ENCODE measurements at regions of chr11 and their contacts with region 1.

Region 1: DNA sequence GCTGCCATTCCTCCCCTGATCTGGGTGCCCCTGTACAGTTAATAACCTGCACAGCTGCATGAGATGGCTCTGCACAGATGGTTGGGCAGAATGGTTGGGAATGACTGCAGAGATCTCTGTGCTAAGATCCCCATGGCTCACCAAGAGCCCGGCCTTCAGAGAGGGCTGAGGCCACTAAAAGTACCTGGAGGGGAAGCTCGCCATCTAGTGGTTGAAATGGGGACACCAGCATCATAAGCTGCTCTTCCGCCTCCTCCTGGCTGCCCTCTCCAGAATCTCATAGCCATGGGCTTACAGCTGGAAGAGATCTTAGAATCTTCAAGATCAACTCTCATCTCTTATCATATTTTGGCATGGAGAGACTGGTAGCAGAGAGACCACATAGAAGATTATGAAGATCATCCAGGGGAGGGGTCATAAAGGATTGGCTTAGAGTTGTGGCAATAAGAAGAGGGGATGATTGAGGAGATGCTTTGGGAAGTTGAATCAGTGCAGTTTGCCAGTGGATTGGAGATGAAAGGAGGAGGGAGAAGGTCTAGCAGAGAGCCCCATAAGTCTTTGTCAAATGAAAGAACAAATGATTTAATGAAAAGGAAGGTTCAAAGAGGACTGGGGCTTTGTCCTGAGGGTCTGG is 22.0 kb upstream of the TLCD5 start:
- DNase-seq: peak; percentile 58
- H3K4me3 Mint-ChIP-seq: no peak overlapping the region
- H3K27ac Mint-ChIP-seq: no peak overlapping the region
- H3K4me1 Mint-ChIP-seq: peaks cover 9% of the 10 kb centered on the region
- H3K27me3 Mint-ChIP-seq: peaks cover 34% of the 10 kb centered on the region

Region 2: DNA sequence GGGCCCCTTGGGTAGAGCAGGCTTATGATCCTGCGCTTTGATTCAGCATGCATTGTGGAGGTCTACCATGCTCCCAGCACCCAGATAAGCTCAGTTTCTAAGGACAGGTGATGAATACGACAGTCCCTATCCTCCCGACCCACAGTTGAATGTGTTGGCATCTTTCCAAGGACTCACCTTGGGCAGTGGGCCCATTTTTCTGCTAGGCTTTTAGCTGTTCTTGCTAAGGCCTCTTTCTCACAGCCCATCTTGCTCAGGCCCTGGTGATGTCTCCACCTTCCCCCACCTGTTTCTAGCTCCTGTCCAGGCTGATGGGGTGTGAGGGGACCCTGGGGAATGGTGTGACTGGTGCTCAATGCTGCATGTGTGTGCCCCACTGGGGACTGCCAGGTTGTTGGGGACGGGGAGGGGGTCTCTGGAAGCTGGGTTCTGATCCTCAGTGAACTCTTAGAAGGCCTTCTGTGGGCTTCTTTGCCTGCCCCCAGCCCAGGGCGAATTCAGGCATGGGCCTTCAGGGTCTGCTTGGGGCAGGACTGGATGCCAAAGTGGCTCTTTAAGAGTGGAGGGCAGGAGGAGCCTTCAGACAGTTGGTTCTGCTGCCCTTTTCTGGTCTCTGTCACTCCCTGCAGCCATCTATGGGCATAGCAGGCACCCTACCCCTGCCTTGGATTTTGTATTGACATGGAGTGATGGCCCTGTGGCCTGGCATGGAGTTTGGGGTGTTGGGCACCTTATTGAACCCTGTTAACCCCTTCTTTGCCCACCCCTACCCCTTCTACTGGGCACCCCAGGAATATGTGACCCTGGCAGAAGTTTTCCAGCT is 1662.6 kb before region 1 on chr11:
- CTCF ChIA-PET with region 1: no interaction called
- POLR2A ChIA-PET with region 1: no interaction called
- DNase-seq: no peak
- H3K4me3 Mint-ChIP-seq: no peak overlapping the region
- H3K27ac Mint-ChIP-seq: no peak overlapping the region
- H3K4me1 Mint-ChIP-seq: no peaks in the 10 kb centered on the region
- H3K27me3 Mint-ChIP-seq: peaks cover 2% of the 10 kb centered on the region

Region 3: GRCh38 chr11:119599864-119600541 is 703.1 kb before region 1 on chr11:
- CTCF ChIA-PET with region 1: no interaction called
- POLR2A ChIA-PET with region 1: no interaction called
- DNase-seq: no peak
- H3K4me3 Mint-ChIP-seq: no peak overlapping the region
- H3K27ac Mint-ChIP-seq: no peak overlapping the region
- H3K4me1 Mint-ChIP-seq: no peaks in the 10 kb centered on the region
- H3K27me3 Mint-ChIP-seq: peaks cover 22% of the 10 kb centered on the region

Region 4: DNA sequence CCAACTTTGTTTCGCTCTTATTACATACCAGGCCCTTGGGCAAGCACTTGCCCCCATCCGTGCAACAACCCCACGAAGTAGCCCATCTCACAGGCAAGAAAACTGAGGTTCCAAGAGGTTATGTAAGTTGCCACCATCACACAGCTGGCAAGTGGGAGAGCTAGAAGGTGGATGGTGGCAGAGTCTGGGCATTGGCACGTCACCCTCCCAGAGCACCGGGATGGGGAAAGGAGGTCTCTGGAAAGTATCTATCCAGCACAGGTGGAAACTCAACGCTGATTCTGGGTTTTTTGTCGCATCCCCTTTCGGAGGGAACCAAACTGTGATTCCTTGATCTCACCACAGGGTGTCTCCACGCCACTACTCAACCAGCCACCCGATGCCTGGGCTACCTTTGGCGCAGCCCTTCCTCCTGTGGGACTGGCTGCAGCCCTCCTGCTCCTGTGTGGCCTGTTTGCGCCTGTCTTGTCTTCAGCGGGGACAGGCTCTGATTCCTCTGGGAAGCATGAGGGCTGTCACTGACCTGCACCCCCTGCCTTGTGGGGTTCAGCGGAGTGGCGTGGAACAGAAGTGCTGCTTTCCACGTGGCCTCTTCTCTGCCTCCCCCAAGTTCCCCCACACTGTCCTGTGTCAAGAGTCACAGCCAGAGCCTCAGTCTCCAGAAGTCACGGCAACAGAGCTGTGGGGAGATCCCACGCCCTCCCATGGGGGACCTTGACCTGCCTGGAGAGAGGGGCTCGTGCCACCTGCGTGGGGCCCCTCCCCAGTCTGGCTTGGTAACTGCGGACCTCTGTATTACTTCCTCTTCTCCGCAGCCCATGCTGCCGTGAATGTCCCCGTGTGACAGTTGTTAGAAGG is 130.8 kb before region 1 on chr11:
- CTCF ChIA-PET with region 1: interaction called, 61 read pairs
- POLR2A ChIA-PET with region 1: no interaction called
- DNase-seq: peak; percentile 52
- H3K4me3 Mint-ChIP-seq: no peak overlapping the region
- H3K27ac Mint-ChIP-seq: no peak overlapping the region
- H3K4me1 Mint-ChIP-seq: peaks cover 3% of the 10 kb centered on the region
- H3K27me3 Mint-ChIP-seq: peaks cover 68% of the 10 kb centered on the region

Region 5: GRCh38 chr11:120235024-120235861 is 67.9 kb before region 1 on chr11:
- CTCF ChIA-PET with region 1: interaction called, 272 read pairs
- POLR2A ChIA-PET with region 1: interaction called, 4 read pairs
- DNase-seq: peak; percentile 72
- H3K4me3 Mint-ChIP-seq: no peak overlapping the region
- H3K27ac Mint-ChIP-seq: no peak overlapping the region
- H3K4me1 Mint-ChIP-seq: no peaks in the 10 kb centered on the region
- H3K27me3 Mint-ChIP-seq: peaks cover 58% of the 10 kb centered on the region

Region 6: DNA sequence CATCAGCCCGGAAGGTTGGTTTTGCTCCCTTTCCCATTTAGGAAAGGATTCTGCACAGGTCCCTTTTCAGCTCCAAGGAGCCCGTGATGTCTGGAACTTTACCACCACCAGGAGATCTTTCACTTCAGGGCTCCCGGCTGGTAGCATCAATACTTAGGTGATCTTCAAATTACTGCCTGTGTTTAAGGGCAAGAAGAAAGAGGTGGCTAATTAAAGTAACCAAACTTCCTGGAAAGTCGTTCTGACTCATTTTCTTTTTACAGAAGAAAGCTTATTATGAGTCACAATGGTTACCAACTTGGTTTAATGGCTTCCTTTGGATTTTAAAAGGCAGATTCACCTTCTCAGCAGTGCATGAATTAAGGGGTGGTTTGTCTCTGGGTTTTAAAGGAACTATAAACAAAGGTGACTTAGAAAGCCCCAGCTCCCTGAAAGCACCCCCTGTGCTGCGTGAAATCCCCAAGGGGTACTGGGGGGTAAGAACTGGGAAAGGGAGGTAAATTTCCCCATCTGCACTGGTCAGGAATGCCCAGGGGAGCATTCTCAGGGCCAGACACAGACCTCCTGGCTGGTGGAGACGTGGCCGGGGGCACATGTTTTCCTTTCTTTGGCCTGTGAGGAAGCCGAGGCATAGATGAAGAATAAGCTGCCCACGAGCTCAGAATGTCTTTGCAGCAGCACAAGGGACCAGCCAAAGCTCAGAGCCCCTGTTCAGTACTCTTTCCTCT is 54.4 kb before region 1 on chr11:
- CTCF ChIA-PET with region 1: interaction called, 113 read pairs
- POLR2A ChIA-PET with region 1: interaction called, 3 read pairs
- DNase-seq: peak; percentile 24
- H3K4me3 Mint-ChIP-seq: peak overlapping the region; percentile 36
- H3K27ac Mint-ChIP-seq: peak overlapping the region; percentile 61
- H3K4me1 Mint-ChIP-seq: peaks cover 54% of the 10 kb centered on the region
- H3K27me3 Mint-ChIP-seq: peaks cover 77% of the 10 kb centered on the region

Region 7: DNA sequence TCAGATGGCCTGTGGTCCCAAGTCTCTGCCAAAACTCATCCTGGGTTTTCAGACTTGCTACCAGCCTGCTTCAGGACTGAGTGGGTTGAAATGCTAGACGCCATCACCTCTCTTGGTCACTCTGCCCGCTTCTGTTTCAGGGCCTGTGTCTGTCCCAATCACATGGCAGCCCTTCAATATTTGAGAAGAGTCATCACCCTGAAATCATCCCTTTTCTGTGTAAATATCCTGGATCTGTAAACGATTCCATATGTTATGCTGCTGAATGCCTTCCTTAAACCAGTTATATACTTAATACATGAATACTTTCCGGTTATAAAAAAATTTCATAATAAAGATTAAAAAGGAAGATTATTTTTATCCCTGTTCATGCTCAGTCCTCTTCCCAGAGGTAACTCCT is 17.9 kb before region 1 on chr11:
- CTCF ChIA-PET with region 1: interaction called, 22 read pairs
- POLR2A ChIA-PET with region 1: no interaction called
- DNase-seq: no peak
- H3K4me3 Mint-ChIP-seq: no peak overlapping the region
- H3K27ac Mint-ChIP-seq: no peak overlapping the region
- H3K4me1 Mint-ChIP-seq: no peaks in the 10 kb centered on the region
- H3K27me3 Mint-ChIP-seq: peaks cover 39% of the 10 kb centered on the region

Region 8: DNA sequence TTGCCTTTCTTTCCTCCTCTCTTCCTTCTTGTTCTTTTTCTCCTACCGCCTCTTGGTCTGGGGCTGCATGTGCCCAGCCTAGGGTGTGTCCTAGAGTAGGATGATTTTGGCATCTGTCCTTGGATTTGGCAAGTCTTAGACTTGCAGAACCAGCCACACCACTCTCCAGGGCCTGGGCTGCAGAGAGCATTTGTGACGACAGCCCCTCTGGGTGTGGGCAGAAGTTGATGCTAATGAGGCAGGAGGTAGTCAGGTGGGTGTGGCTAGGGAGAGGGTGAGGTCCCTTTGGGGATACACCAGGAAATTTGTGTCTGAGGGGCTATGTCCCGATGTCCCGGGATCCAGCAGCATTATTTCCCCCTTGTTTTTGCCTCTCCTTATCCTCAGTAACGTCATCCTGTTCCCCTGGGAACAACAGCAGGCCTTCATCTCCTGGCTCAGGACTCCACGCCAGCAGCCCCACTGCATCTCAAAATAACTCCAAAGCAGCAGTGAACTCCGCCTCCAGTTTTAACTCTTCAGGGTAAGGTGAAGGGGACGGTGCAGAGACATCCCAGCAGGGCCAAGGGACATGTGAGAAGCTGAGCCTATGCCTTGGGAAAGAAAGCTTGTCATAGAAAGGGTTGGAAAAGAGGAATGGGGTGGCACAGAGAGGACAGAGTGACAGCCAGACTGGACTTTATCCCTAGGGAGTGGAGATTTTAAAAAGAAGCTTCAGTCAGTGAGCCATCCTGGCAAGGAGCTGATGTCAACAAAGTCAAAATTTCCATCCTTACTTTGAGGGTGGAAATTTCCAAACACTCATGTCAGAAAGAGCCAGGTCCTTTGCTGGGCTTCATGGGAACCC is 13.9 kb after region 1 on chr11:
- CTCF ChIA-PET with region 1: interaction called, 16 read pairs
- POLR2A ChIA-PET with region 1: no interaction called
- DNase-seq: no peak
- H3K4me3 Mint-ChIP-seq: no peak overlapping the region
- H3K27ac Mint-ChIP-seq: no peak overlapping the region
- H3K4me1 Mint-ChIP-seq: peaks cover 2% of the 10 kb centered on the region
- H3K27me3 Mint-ChIP-seq: peaks cover 41% of the 10 kb centered on the region

Region 9: DNA sequence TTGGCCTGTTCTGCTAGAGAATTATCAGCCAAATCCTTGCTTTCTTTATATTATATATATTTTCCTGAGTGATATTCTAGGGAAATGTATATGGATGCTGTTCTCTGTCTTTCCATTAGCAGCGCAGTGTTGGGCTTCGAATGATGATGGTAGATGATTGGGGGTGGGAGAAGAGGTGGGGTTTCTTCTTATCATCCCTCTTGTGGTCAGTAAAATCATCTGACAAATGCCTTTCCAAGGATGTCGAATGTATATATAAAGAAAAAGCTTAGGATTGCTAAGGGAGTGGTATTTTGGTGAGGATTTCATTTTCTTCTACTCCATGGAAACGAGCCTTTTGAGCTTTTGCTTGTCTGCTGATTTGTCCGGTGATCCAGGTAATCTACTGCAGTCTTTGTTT is 82.0 kb after region 1 on chr11:
- CTCF ChIA-PET with region 1: no interaction called
- POLR2A ChIA-PET with region 1: no interaction called
- DNase-seq: no peak
- H3K4me3 Mint-ChIP-seq: no peak overlapping the region
- H3K27ac Mint-ChIP-seq: no peak overlapping the region
- H3K4me1 Mint-ChIP-seq: no peaks in the 10 kb centered on the region
- H3K27me3 Mint-ChIP-seq: peaks cover 41% of the 10 kb centered on the region